Activated naive CD4-positive, alpha-beta T cell treated with anti-CD3 and anti-CD28 coated beads for 36 hours (primary cell): ENCODE measurements at regions of chr5 and their contacts with region 1.

Region 1: DNA sequence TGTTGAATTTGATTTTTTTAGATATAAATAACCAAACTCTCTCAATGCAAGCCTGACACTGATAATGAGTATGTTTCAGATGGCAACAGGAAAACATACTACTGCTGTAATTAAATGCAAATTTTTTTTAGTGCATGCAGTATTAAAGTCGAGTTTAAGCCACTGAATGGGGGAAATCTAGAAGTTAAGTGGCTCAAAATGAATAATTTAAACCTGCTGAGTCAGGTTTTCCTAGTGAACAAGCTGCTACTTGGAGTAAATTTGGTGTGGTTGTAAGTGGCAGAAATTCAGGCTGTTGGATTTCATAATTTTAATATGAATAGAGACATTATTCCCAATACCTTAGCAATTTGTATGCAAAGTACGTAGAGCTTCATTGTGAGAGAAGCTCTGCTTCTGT is 121.8 kb downstream of the SLF1 start:
- DNase-seq: no peak
- H3K4me3 Mint-ChIP-seq: no peak overlapping the region
- H3K27ac Mint-ChIP-seq: no peak overlapping the region
- H3K4me1 Mint-ChIP-seq: no peaks in the 10 kb centered on the region
- H3K27me3 Mint-ChIP-seq: peaks cover 5% of the 10 kb centered on the region

Region 2: GRCh38 chr5:93915142-93915553 is 825.1 kb before region 1 on chr5:
- CTCF ChIA-PET with region 1: no interaction called
- intact Hi-C with region 1: loop called (anchors 2 kb)
- DNase-seq: no peak
- H3K4me3 Mint-ChIP-seq: no peak overlapping the region
- H3K27ac Mint-ChIP-seq: no peak overlapping the region
- H3K4me1 Mint-ChIP-seq: no peaks in the 10 kb centered on the region
- H3K27me3 Mint-ChIP-seq: no peaks in the 10 kb centered on the region

Region 3: DNA sequence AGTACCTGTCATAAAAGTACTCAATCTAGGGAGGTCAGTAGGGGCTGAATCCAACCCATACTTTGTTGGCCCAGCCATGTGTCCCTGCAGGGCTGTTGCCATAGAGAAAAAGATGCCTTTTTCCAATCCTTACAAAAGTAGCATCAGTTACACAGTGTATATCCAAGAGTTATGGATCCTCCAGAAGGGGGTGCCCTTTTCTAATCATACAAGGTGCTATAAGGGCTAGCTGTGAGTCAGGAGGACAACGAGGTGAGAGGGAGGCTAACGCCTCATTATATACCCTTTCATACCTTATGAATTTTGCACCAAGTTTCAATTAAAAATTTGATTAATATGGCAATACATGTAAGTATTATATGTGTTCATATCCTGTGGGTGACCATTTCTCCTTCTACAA is 126.7 kb before region 1 on chr5:
- CTCF ChIA-PET with region 1: interaction called, 10 read pairs
- intact Hi-C with region 1: loop called (anchors 1 kb)
- DNase-seq: peak; percentile 8
- H3K4me3 Mint-ChIP-seq: no peak overlapping the region
- H3K27ac Mint-ChIP-seq: no peak overlapping the region
- H3K4me1 Mint-ChIP-seq: peaks cover 13% of the 10 kb centered on the region
- H3K27me3 Mint-ChIP-seq: no peaks in the 10 kb centered on the region

Region 4: GRCh38 chr5:94751460-94751859 is 11.2 kb after region 1 on chr5:
- CTCF ChIA-PET with region 1: interaction called, 10 read pairs
- intact Hi-C with region 1: no loop called
- DNase-seq: no peak
- H3K4me3 Mint-ChIP-seq: no peak overlapping the region
- H3K27ac Mint-ChIP-seq: no peak overlapping the region
- H3K4me1 Mint-ChIP-seq: peaks cover 2% of the 10 kb centered on the region
- H3K27me3 Mint-ChIP-seq: peaks cover 3% of the 10 kb centered on the region